ENCODE measurements at regions of chr2 and their contacts with region 1.

Region 1: GRCh38 chr2:42086500-42086953 is 38.7 kb downstream of the PKDCC start:
- DNase-seq: no peak
- H3K4me3 ChIP-seq: no peak overlapping the region
- CTCF ChIP-seq: peak; percentile 57

Region 2: DNA sequence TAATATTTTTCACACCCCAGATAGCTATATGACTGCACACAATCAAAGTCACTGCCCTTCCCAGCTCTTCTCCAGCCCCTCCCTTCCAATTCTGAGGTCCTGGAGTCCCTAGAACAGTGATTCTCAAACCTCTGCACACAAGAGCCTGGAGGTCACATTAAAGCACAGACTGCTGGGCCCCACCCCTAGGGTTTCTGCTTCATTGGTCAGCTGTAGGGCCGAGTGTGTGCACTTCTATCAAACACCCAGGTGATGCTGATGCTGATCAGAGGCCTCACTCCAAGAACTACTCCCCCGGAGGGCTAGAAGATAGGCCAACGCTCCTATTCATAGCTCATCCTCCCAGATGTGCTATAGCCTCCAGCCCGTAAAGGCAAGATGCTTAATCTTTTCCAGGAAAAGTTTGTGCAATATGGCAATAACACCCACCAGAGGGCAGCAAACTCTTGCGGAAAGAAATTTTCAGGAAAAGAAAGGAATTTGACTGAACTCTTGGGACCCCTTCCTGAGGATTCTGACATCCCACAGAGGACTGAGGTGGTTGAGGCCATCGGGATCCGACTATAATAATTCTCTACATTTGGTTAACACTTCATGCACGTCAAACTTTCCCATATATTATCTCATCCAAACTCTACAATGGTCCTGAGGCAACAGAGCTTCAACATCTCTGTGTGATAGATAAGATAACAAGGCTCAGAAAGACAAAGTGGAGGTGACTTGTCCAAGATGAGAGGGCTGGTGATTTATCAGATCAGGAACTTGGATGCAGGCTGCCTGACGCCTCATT is 232.9 kb before region 1 on chr2:
- CTCF ChIA-PET with region 1: interaction called, 801 read pairs
- POLR2A ChIA-PET with region 1: no interaction called
- DNase-seq: no peak
- H3K4me3 ChIP-seq: no peak overlapping the region
- CTCF ChIP-seq: peak; percentile 53

Region 3: DNA sequence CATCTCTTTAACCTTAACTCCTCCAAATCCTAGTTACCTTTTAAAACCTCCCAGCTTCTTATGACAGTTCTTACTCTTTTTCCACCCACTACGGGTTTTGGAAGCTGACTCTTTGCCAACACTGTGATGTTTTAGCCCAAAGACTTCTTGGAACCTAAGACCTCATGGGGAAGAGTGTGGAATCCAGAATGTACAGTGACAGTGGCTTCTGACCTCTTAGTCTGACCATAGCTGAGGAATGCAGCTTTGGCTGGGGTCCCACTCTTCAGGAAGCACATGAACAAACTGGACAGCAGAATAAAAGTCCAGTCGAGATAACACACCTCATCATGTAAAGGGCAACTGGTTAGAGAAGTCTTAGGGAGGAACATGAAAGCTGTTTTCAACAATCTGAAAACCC is 199.8 kb before region 1 on chr2:
- CTCF ChIA-PET with region 1: interaction called, 1,155 read pairs
- POLR2A ChIA-PET with region 1: no interaction called
- DNase-seq: no peak
- H3K4me3 ChIP-seq: no peak overlapping the region
- CTCF ChIP-seq: no peak

Region 4: GRCh38 chr2:41966431-41966893 is 120.1 kb before region 1 on chr2:
- CTCF ChIA-PET with region 1: interaction called, 25 read pairs
- POLR2A ChIA-PET with region 1: no interaction called
- DNase-seq: peak; percentile 92
- H3K4me3 ChIP-seq: no peak overlapping the region
- CTCF ChIP-seq: no peak

Region 5: GRCh38 chr2:42060718-42061619 is 25.6 kb before region 1 on chr2:
- CTCF ChIA-PET with region 1: interaction called, 12 read pairs
- POLR2A ChIA-PET with region 1: no interaction called
- DNase-seq: no peak
- H3K4me3 ChIP-seq: no peak overlapping the region
- CTCF ChIP-seq: no peak

Region 6: GRCh38 chr2:42328148-42328833 is 241.8 kb after region 1 on chr2:
- CTCF ChIA-PET with region 1: interaction called, 25 read pairs
- POLR2A ChIA-PET with region 1: no interaction called
- DNase-seq: no peak
- H3K4me3 ChIP-seq: no peak overlapping the region
- CTCF ChIP-seq: peak; percentile 8

Region 7: GRCh38 chr2:42360890-42361727 is 274.6 kb after region 1 on chr2 and contains the start of gene COX7A2L:
- CTCF ChIA-PET with region 1: interaction called, 16 read pairs
- POLR2A ChIA-PET with region 1: no interaction called
- DNase-seq: peak; percentile 82
- H3K4me3 ChIP-seq: peak within 1 kb of the TSS; percentile 100
- CTCF ChIP-seq: peak; percentile 40

Measured in AG04449 (cell line).